ENCODE measurements at regions of chr12 and their contacts with region 1.

Region 1: DNA sequence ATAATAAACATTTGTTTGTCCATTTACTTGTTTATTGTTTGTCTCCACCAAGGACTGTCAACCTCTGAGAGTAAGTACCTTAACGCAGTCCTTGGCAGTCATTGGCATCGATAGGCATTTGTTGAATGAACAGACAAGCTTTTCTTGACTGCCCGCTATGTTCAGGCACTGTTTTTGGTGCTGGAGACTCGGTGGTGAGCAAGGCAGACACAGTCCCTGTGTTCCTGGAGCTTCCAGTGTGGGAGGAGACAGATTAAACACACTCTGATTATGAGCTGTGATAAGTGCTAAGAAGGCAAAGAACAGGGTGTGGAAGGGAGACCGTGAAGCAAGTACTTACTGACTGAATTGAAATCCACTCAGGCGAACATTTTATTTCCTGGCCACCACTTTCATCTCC is 1.2 kb downstream of the ATP6V0A2 start:
- DNase-seq: peak; percentile 74
- H3K4me3 Mint-ChIP-seq: peak overlapping the region; percentile 98
- H3K27ac Mint-ChIP-seq: peak overlapping the region; percentile 93
- H3K4me1 Mint-ChIP-seq: peaks cover 36% of the 10 kb centered on the region
- H3K27me3 Mint-ChIP-seq: no peaks in the 10 kb centered on the region

Region 2: DNA sequence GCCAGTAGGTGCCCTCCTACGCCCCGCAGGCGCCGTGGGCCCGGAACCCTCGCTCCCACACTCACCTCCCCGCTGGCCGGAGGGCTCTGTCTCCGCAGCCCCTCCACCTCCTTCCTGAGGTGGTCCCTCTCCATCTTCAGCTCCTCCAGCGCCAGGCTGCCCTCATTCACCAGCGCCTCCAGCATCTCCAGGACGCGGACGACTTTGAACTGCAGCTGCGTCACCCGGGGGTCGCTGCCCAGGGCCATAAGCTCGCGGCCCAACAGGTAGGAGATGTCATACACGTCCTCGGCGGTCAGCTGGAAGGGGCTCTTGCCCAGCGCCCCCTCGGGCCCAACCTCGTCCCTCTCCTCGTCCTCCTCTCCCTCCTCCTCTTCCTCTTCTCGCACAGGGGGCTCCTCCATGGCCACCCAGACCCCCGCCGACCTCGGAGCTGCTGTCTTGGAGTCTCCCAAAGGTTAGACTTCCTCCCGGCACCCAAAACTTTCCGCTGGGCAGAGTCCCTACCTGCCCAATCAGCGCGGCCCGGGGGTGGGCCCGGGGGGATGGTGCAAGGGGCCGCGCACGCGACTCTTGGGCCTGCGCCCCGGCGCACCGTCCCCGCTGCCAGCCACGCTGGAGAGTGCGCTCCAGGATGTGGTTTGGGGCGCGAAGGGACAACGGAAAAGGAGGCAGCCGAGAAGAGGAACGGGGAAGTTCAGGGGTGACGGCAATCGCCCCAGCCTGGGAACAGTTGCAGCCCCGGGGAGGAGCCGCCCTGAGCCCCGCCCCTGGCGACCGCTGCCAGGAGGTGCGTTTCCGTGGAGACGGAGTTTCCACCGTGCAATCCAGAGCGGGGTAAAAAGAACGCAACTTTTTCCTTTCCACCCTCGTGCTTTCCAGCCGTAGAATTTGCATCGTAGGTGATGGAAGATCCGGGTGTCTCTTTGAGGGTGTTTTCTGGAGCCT is 277.1 kb before region 1 on chr12 and contains the start of gene RILPL2:
- intact Hi-C with region 1: loop called (anchors 10 kb)
- DNase-seq: peak; percentile 98
- H3K4me3 Mint-ChIP-seq: peak within 1 kb of the TSS; percentile 99
- H3K27ac Mint-ChIP-seq: peak within 1 kb of the TSS; percentile 99
- H3K4me1 Mint-ChIP-seq: peaks cover 35% of the 10 kb centered on the region
- H3K27me3 Mint-ChIP-seq: no peaks in the 10 kb centered on the region
- total RNA-seq, gene RILPL2: 17.2 TPM in 2 replicates

Region 3: DNA sequence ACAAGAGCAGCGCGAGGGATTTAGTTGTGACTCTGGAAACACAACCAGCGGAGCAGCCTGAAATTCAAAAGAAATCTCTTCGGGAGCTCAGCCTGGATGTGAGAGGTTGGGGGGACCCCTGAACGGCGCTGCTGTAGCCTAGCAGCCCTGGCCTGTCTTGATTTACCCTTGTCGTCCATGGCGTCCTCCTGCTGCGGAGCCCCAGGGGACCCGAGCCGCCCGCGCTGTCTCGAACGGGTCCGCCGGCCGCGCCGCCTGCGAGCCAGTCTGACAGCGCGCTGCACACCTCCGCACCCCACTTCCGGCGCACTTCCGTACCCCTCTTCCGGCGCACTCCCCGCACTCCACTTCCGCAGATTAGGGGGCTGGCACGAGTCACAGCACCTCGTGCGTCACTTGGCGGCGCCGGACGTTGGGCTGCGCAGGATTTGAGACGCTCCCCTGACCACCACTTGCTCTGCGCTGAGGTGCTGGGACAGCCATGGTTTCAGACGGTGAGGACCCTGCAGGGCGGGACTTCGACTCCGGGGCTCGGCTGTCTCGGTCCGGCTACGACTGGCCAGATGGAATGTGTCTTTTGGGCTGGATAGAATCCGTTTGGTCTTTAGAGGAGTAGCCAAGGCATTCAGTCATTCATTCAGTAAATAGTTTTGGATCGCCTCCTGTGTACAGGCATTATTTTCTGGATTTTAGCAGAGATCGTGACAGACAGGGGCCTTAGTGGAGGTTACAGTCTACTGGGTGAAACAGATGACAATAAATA is 79.8 kb before region 1 on chr12 and contains the starts of genes EIF2B1 and GTF2H3:
- intact Hi-C with region 1: loop called (anchors 1 kb)
- DNase-seq: peak; percentile 99
- H3K4me3 Mint-ChIP-seq: peak within 1 kb of the TSS; percentile 98
- H3K27ac Mint-ChIP-seq: peak within 1 kb of the TSS; percentile 93
- H3K4me1 Mint-ChIP-seq: peaks cover 17% of the 10 kb centered on the region
- H3K27me3 Mint-ChIP-seq: no peaks in the 10 kb centered on the region
- total RNA-seq, gene EIF2B1: 81.5 and 84.8 TPM in 2 replicates
- total RNA-seq, gene GTF2H3: 66.8 and 69.7 TPM in 2 replicates

Region 4: GRCh38 chr12:123743002-123743401 is 29.6 kb after region 1 on chr12:
- intact Hi-C with region 1: loop called (anchors 2 kb)
- DNase-seq: no peak
- H3K4me3 Mint-ChIP-seq: peak overlapping the region; percentile 18
- H3K27ac Mint-ChIP-seq: peak overlapping the region; percentile 76
- H3K4me1 Mint-ChIP-seq: peaks cover 21% of the 10 kb centered on the region
- H3K27me3 Mint-ChIP-seq: no peaks in the 10 kb centered on the region

Measured in activated CD4-positive, alpha-beta T cell treated with anti-CD3 and anti-CD28 coated beads, Interleukin-2, amount 10 ng/mL, durations not matched to agents 24 days and 14 days (primary cell).